Heart left ventricle (tissue), 16 donors: ENCODE measurements at regions of chr3 and their contacts with region 1.

Region 1: DNA sequence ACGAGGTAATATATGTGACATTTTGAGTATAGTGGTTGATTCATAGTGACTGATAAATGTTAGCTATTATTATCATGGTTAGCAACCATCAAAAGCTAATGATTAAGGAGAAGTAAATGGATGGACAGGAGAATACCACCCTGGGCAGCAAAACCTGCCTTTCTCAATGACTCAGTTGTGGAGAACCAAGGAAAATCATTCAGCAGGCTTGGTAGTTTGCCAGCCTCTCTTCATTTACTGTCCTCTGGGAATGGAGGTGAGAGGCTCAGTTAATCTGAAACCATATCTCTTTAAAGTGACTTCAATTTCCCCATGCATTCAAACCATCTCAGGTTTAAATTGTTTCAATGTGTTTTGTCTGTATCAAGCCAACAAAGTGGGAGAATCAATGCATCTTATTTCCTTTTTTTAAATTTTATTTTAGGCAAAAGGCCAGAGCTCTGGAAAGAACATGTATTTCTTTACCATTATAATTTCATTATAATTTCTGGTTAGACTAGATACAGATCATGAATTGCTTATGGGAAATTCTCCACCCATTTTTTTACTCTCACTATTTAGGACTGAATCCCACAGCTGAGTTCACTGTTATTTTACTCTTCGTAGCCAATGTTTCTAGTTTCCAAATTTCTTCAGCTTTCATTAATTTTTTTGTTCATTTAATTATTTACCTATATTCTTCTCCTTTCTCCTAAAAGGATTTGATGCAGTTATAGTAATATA is 2.7 kb downstream of the TM4SF18 start:
- DNase-seq: no peak
- ATAC-seq: no peak
- H3K4me3 ChIP-seq: peak overlapping the region in 4 of 12 donors; percentile 36 to 54 (median 46)
- H3K27ac ChIP-seq: no peak overlapping the region
- H3K4me1 ChIP-seq: peaks cover 0 to 7% (median 0%) of the 10 kb centered on the region in 12 donors
- H3K27me3 ChIP-seq: no peaks in the 10 kb centered on the region
- CTCF ChIP-seq: no peak
- POLR2A ChIP-seq: no peak

Region 2: DNA sequence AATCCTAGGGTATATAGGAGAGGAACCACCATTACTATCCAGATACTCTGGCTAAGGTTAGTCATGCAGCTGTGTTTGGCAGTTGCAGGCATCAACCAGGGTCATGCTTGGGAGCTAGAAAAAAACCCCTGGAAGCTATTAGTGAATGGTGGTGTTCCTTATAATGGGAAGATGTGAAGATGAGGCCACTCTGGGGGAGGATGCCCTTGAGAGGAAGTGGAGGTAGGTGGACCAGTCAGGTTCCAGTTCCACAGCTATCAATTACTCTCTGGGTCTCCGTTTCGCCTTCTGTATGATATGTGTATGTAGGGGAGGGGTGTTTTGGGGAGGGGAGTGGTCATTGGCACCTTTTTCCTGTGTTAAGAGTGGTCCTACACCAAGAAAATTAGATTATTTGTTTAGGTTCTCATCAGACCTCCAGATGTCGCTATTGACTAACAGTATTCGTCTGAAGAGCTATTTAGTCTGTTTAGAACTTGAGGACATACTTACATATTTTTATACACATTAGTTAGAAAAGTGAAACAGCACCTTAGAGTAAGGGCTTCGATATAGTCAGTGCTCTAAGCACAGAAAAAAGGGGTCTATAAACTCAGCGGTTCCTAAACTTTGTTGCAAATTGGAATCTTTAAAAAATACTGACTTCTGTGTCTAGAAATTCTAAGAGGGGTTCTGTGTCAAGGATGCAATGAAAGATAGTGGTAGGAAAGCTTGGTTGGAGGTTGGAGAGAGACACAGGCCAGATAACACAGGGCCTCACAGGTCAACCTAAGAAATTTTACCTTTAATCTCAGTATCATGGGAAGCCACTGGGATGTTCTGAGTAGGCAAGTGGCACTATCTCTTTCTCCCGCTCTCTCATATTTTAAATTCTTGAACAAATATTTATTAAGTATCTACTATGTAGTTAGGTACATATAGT is 210.5 kb before region 1 on chr3:
- intact Hi-C with region 1: loop called in 1 of 10 experiments (anchors 5 kb)
- DNase-seq: no peak
- ATAC-seq: peak in 3 of 4 donors; percentile 53 to 82 (median 73)
- H3K4me3 ChIP-seq: no peak overlapping the region
- H3K27ac ChIP-seq: no peak overlapping the region
- H3K4me1 ChIP-seq: peaks cover 0 to 4% (median 0%) of the 10 kb centered on the region in 12 donors
- H3K27me3 ChIP-seq: no peaks in the 10 kb centered on the region
- CTCF ChIP-seq: peak; percentile 47 to 82 (median 66)
- POLR2A ChIP-seq: no peak

Region 3: GRCh38 chr3:149163066-149163465 is 167.7 kb before region 1 on chr3:
- intact Hi-C with region 1: no loop called
- DNase-seq: no peak
- ATAC-seq: no peak
- H3K4me3 ChIP-seq: no peak overlapping the region
- H3K27ac ChIP-seq: peak overlapping the region in 1 of 12 donors; percentile 35
- H3K4me1 ChIP-seq: peaks cover 0 to 3% (median 0%) of the 10 kb centered on the region in 12 donors
- H3K27me3 ChIP-seq: no peaks in the 10 kb centered on the region
- CTCF ChIP-seq: no peak
- POLR2A ChIP-seq: no peak

Region 4: GRCh38 chr3:149273096-149273751 is 57.5 kb before region 1 on chr3:
- intact Hi-C with region 1: no loop called
- DNase-seq: peak in 2 of 5 donors; percentile 40 to 48
- ATAC-seq: peak; percentile 71 to 91 (median 82)
- H3K4me3 ChIP-seq: no peak overlapping the region
- H3K27ac ChIP-seq: peak overlapping the region in 3 of 12 donors; percentile 5 to 33 (median 32)
- H3K4me1 ChIP-seq: peaks cover 0 to 15% (median 3%) of the 10 kb centered on the region in 12 donors
- H3K27me3 ChIP-seq: no peaks in the 10 kb centered on the region
- CTCF ChIP-seq: peak; percentile 80 to 98 (median 96)
- POLR2A ChIP-seq: no peak

Region 5: GRCh38 chr3:149377408-149378377 is 46.9 kb after region 1 on chr3 and contains the start of gene TM4SF1:
- intact Hi-C with region 1: loop called in 1 of 10 experiments (anchors 5 kb)
- DNase-seq: peak in 4 of 5 donors; percentile 75 to 83 (median 82)
- ATAC-seq: peak; percentile 74 to 98 (median 94)
- H3K4me3 ChIP-seq: peak within 1 kb of the TSS; percentile 40 to 73 (median 60)
- H3K27ac ChIP-seq: peak within 1 kb of the TSS; percentile 71 to 90 (median 84)
- H3K4me1 ChIP-seq: peaks cover 0 to 45% (median 15%) of the 10 kb centered on the region in 12 donors
- H3K27me3 ChIP-seq: no peaks in the 10 kb centered on the region
- CTCF ChIP-seq: no peak
- POLR2A ChIP-seq: peak in 1 of 2 donors; percentile 88
- total RNA-seq, gene TM4SF1: 61.6 to 224 (median 111) TPM